Activated CD4-positive, alpha-beta T cell treated with anti-CD3 and anti-CD28 coated beads, Interleukin-2, amount 10 ng/mL, durations not matched to agents 24 days and 14 days (primary cell): ENCODE measurements at regions of chr9 and their contacts with region 1.

Region 1: DNA sequence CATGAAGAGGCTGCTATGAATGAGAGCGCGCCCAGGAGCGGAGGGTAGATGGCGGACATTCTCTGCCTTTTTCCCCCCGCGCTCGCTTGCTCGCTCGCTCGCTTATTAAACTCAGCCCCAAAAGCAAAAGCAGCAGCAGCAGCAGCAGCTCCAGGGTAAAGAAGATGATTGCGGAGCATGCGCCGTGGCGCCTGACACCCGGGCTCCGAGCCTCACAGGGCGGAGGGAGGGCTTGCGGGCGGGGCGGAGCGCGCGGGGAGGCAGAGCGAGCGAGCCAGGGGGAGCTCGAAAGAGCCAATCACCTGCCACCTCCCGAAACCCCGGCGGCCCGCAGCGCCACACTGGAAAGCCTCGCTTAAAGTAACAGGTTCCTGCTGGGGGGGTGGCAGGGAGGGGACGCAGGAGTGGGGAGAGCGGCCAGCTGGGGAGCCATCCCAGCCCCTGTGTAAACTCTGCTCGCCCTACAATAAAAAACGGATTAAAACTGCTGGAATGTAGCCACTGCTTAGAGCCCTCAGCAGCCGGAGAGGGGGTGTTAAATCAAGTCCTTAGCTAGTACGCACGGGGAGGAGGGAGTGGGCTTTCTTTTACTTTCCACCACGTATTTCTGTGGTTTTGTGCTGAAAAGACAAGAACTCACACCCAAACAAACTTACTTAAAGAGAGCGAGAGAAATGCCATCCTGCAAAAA is at the start of gene MLLT3:
- DNase-seq: peak; percentile 99
- H3K4me3 Mint-ChIP-seq: peak within 1 kb of the TSS; percentile 92
- H3K27ac Mint-ChIP-seq: peak within 1 kb of the TSS; percentile 98
- H3K4me1 Mint-ChIP-seq: peaks cover 44% of the 10 kb centered on the region
- H3K27me3 Mint-ChIP-seq: no peaks in the 10 kb centered on the region
- total RNA-seq, gene MLLT3: 26.5 and 27.8 TPM in 2 replicates

Region 2: GRCh38 chr9:19925817-19926503 is 696.5 kb before region 1 on chr9:
- intact Hi-C with region 1: loop called (anchors 1 kb)
- DNase-seq: peak; percentile 95
- H3K4me3 Mint-ChIP-seq: peak overlapping the region; percentile 75
- H3K27ac Mint-ChIP-seq: peak overlapping the region; percentile 58
- H3K4me1 Mint-ChIP-seq: peaks cover 25% of the 10 kb centered on the region
- H3K27me3 Mint-ChIP-seq: peaks cover 10% of the 10 kb centered on the region

Region 3: DNA sequence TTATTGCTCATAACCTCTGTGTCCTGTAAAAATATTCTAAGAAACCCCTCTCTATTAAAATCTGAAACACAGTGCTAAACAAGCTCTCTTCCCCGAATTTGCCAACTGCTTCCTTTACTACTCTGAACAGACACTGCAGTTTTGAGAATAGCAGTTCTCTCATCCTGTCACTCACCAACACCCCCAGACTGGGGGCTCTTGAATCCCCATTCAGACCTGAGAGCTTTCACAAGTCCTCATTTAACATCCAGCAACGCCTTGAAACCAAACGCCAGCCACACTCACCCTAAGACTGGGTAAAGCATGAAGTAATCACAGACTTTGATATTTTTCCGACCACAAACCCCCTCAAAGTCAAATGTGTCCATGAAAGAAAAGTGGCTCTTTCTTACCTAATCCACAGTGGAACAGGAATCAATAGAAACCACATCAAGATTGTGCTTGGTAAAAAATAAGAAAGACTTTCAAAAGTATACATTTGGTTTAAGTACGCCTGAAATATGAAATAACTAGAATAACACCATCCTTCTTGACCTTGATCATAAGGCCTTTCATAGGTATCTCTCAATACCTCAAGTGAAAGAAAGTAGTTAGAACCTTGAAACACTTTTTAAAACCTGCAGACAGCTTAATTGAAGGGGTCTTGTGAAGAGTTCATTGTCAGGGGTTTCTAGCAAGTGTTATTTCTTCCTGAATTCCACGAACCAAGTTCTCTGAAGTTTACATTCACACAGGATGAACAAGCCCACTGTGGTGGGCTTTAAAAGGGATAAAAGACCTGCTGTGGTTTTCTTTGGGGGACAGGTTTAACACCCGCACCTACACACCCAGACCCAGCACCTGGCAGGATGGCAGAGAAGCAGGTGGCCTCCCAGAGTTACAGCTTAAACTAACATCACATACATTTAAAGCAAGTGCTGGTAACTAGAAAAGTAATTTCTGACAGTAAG is 412.8 kb before region 1 on chr9:
- intact Hi-C with region 1: loop called (anchors 1 kb)
- DNase-seq: peak; percentile 89
- H3K4me3 Mint-ChIP-seq: peak overlapping the region; percentile 57
- H3K27ac Mint-ChIP-seq: peak overlapping the region; percentile 95
- H3K4me1 Mint-ChIP-seq: peaks cover 36% of the 10 kb centered on the region
- H3K27me3 Mint-ChIP-seq: no peaks in the 10 kb centered on the region

Region 4: GRCh38 chr9:20426019-20426418 is 196.5 kb before region 1 on chr9:
- intact Hi-C with region 1: loop called (anchors 5 kb)
- DNase-seq: no peak
- H3K4me3 Mint-ChIP-seq: no peak overlapping the region
- H3K27ac Mint-ChIP-seq: no peak overlapping the region
- H3K4me1 Mint-ChIP-seq: peaks cover 7% of the 10 kb centered on the region
- H3K27me3 Mint-ChIP-seq: no peaks in the 10 kb centered on the region

Region 5: GRCh38 chr9:20558566-20559016 is 63.9 kb before region 1 on chr9:
- intact Hi-C with region 1: loop called (anchors 1 kb)
- DNase-seq: peak; percentile 76
- H3K4me3 Mint-ChIP-seq: peak overlapping the region; percentile 24
- H3K27ac Mint-ChIP-seq: peak overlapping the region; percentile 77
- H3K4me1 Mint-ChIP-seq: peaks cover 77% of the 10 kb centered on the region
- H3K27me3 Mint-ChIP-seq: no peaks in the 10 kb centered on the region

Region 6: DNA sequence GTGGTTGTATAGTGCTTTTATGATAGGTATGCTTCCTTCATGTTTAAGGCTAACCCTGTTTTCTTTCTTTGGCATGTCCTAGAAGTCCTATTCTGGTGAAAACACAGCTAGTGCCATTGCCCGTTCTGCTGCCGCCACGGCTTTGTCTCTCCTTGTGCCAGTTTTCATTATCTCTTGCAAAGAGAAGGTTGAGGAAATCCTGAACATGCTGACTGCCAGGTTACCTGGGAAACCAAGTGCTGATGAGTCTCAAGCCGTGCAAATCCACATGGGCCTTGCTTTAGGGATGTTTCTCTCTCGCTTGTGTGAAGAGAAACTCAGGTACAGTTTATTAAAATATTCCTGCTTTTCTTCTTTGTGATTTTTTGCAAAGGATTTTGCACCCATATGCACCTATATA is 306.8 kb after region 1 on chr9:
- intact Hi-C with region 1: loop called (anchors 5 kb)
- DNase-seq: no peak
- H3K4me3 Mint-ChIP-seq: no peak overlapping the region
- H3K27ac Mint-ChIP-seq: no peak overlapping the region
- H3K4me1 Mint-ChIP-seq: peaks cover 25% of the 10 kb centered on the region
- H3K27me3 Mint-ChIP-seq: no peaks in the 10 kb centered on the region

Region 7: DNA sequence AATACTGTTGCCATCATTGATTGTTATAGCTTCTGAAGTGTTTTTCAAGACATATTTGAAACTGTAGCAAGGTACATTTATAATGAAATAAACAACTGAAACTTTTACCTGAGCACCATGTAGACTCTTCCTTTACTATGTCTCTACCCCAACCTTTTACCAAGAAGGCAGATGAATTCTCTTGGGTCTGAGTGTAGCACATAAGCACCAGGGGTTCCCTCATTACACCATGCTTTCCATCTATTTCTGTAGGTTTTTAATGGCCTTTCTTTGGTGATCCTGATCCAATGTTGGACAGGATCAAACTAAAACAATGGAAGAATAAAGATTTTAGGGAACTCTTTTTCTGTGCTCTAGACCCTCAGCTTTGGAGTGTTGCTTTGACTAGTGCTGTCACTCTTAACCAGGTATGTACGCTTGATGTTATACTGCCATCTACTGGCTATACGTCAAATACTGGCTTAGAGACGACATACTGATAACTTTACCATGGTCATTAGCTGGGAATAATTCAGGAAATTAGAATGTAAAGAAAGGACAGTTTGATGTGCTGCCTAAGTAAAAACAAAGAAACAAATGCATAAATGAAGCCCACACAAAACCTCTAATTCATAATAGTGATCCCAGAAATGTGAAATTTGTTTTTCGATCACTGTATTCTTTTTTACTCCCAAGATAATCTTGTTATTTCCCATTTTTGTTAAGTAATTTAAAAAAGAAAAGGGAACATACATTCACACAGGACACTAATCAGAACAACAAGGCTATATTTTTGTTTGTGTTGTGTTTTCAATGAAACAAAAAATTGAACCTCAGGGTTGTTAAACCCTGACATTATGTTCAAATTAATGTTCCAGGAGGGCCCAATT is 488.5 kb after region 1 on chr9:
- intact Hi-C with region 1: loop called (anchors 1 kb)
- DNase-seq: peak; percentile 81
- H3K4me3 Mint-ChIP-seq: no peak overlapping the region
- H3K27ac Mint-ChIP-seq: no peak overlapping the region
- H3K4me1 Mint-ChIP-seq: no peaks in the 10 kb centered on the region
- H3K27me3 Mint-ChIP-seq: peaks cover 24% of the 10 kb centered on the region